Panc1 (cell line): ENCODE measurements at regions of chr20 and their contacts with region 1.

Region 1: DNA sequence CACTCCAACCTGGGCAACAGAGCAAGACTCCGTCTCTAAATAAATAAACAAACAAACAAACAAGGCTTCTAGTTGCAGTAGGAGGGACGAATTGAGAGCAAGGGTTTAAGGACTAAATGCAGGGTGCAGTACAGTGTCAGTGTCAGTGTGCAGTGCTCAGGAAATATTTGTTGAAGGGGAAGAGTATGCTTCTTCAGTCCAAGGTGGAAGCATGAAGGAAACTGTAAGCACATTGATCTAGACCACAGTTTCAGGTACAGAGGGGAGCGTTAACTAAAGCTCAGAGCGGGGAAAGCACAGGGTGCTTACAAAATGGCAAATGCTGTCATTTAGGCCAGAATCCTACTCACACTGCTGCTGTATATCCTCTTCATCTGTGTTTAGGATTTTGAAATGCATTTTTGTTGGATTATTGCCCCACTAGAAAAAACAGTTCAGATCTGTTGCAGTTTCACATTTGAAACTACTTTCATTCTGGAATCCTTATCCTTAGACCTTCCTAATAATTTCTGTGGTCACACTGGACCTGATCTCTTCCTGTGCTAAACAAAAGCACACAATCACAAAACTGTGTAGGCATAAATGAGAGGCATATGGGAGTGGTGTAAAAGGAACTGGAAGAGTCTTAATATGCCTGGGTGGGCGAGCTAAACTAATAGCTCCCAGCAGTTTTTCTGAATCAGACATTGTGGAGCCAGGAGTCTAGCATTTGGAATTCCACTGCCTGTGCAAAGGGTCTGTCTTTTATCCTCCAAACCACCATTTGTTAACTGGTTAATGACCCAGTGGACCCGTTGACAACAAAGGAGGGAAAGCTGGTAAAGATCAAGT is 41.4 kb downstream of the CBFA2T2 start:
- DNase-seq: no peak
- ATAC-seq: no peak
- H3K4me3 ChIP-seq: no peak overlapping the region
- H3K27ac ChIP-seq: no peak overlapping the region; the same call in 1 of the 2 replicates
- H3K4me1 ChIP-seq: peaks cover 6% of the 10 kb centered on the region; the same call in 1 of the 2 replicates
- H3K27me3 ChIP-seq: no peaks in the 10 kb centered on the region
- CTCF ChIP-seq: no peak

Region 2: GRCh38 chr20:33359462-33359861 is 171.8 kb before region 1 on chr20:
- CTCF ChIA-PET with region 1: no interaction called
- POLR2A ChIA-PET with region 1: interaction called, 10 read pairs
- in situ Hi-C with region 1: no loop called
- intact Hi-C with region 1: no loop called
- DNase-seq: no peak
- ATAC-seq: no peak
- H3K4me3 ChIP-seq: no peak overlapping the region
- H3K27ac ChIP-seq: no peak overlapping the region
- H3K4me1 ChIP-seq: no peaks in the 10 kb centered on the region
- H3K27me3 ChIP-seq: no peaks in the 10 kb centered on the region
- CTCF ChIP-seq: no peak

Region 3: GRCh38 chr20:33465481-33466302 is 65.6 kb before region 1 on chr20:
- CTCF ChIA-PET with region 1: no interaction called
- POLR2A ChIA-PET with region 1: no interaction called
- in situ Hi-C with region 1: no loop called
- intact Hi-C with region 1: no loop called
- DNase-seq: no peak
- ATAC-seq: no peak
- H3K4me3 ChIP-seq: no peak overlapping the region
- H3K27ac ChIP-seq: no peak overlapping the region
- H3K4me1 ChIP-seq: no peaks in the 10 kb centered on the region
- H3K27me3 ChIP-seq: no peaks in the 10 kb centered on the region
- CTCF ChIP-seq: no peak